B cell (primary cell): ENCODE measurements at regions of chr1 and their contacts with region 1.

Region 1: DNA sequence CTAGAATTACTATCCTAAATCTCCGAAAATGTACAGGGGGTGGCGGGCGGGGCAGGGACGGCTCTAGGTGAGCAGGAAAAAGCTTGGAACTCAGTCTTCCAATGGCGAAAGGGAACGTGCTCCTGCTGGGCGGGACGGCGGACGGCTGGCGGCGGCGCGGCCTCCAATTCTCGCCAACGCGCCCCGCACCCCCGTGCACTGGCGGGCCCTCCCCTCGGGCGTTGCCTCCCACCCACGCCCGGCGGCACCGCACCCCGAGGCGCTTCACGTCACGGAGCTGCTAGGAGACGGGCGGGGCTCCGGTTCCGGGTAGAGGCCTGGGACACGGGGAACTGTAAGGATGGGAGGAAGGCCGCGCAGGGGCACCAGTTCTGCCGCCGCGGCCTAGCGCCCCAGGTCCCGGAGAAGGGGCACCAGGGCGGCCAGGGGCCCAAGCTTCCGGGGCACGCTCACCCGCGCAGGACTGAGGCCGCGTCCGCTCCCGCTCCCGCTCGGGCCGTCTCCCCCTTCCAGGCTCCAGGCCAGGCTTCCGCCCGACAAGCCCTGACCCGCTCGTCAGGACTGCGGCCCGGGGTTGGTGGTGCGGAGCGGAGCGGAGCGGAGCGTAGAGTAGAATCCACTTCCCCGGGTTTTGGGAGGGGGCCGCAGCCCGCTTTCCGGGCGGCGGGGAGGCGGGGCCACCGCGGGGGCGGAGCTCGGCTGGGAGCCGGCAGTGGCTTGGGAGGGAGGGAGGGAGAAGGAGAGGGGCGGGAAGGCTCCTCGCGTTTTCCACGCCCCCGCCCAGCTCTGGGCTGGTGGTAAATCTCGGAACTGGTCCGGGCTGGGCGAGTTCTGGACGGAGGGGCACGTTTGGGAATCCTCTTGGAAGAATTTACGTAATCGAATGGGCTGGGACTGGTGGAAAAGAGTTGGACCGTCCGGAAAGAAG is at the start of gene DDX59:
- DNase-seq: peak; percentile 92
- ATAC-seq: peak; percentile 82
- H3K4me3 ChIP-seq: peak within 1 kb of the TSS; percentile 56 to 95 (median 78)
- H3K4me3 Mint-ChIP-seq: peak within 1 kb of the TSS; percentile 99
- H3K27ac ChIP-seq: peak within 1 kb of the TSS; percentile 92 to 98
- H3K27ac Mint-ChIP-seq: peak within 1 kb of the TSS; percentile 99
- H3K4me1 ChIP-seq: peaks cover 8 to 13% of the 10 kb centered on the region in 2 donors
- H3K4me1 Mint-ChIP-seq: peaks cover 42% of the 10 kb centered on the region
- H3K27me3 ChIP-seq: no peaks in the 10 kb centered on the region
- H3K27me3 Mint-ChIP-seq: no peaks in the 10 kb centered on the region
- CTCF ChIP-seq: no peak
- total RNA-seq, gene DDX59: 41.9 and 43.6 TPM in 2 replicates

Region 2: GRCh38 chr1:200654660-200655059 is 14.9 kb before region 1 on chr1:
- CTCF ChIA-PET with region 1: no interaction called
- POLR2A ChIA-PET with region 1: no interaction called
- intact Hi-C with region 1: loop called (anchors 2 kb)
- DNase-seq: no peak
- ATAC-seq: no peak
- H3K4me3 ChIP-seq: no peak overlapping the region
- H3K4me3 Mint-ChIP-seq: no peak overlapping the region
- H3K27ac ChIP-seq: no peak overlapping the region
- H3K27ac Mint-ChIP-seq: peak overlapping the region; percentile 1
- H3K4me1 ChIP-seq: peaks cover 0 to 7% of the 10 kb centered on the region in 2 donors
- H3K4me1 Mint-ChIP-seq: peaks cover 24% of the 10 kb centered on the region
- H3K27me3 ChIP-seq: no peaks in the 10 kb centered on the region
- H3K27me3 Mint-ChIP-seq: no peaks in the 10 kb centered on the region
- CTCF ChIP-seq: no peak